Activated CD8-positive, alpha-beta memory T cell treated with anti-CD3 and anti-CD28 coated beads, Interleukin-2, amount 10 ng/mL, durations not matched to agents 7 days and 5 days (primary cell): ENCODE measurements at regions of chr11 and their contacts with region 1.

Region 1: DNA sequence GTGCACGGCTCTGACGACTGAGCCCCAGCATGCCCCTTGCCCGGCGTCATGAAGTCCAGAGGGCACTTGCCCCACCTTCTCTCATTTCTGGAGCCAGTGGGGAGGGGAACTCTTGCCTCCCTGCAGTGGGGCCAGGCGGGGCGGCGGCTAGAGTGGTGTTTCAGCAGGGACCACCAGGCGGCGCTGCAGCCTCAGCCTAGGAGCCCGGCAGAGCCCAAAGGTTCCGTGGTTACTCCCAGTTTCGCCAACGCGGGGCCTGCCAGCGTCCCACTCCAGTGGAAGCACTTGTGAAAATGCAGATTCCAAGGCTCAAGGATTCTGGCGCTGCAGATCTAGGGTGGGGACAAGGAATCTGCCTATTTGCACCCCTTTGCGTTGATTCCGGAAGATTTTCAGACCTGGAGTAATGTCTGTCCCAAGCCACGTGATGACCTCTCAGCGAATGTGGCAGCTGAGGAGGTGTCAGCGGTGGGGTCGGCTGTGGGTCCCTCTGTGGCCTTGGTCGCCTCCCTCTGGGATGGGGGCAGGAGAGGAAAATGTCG is 55.7 kb downstream of the CD82 start:
- DNase-seq: peak; percentile 68
- ATAC-seq: peak; percentile 66
- H3K4me3 Mint-ChIP-seq: no peak overlapping the region
- H3K27ac Mint-ChIP-seq: no peak overlapping the region
- H3K4me1 Mint-ChIP-seq: peaks cover 6% of the 10 kb centered on the region
- H3K27me3 Mint-ChIP-seq: no peaks in the 10 kb centered on the region

Region 2: DNA sequence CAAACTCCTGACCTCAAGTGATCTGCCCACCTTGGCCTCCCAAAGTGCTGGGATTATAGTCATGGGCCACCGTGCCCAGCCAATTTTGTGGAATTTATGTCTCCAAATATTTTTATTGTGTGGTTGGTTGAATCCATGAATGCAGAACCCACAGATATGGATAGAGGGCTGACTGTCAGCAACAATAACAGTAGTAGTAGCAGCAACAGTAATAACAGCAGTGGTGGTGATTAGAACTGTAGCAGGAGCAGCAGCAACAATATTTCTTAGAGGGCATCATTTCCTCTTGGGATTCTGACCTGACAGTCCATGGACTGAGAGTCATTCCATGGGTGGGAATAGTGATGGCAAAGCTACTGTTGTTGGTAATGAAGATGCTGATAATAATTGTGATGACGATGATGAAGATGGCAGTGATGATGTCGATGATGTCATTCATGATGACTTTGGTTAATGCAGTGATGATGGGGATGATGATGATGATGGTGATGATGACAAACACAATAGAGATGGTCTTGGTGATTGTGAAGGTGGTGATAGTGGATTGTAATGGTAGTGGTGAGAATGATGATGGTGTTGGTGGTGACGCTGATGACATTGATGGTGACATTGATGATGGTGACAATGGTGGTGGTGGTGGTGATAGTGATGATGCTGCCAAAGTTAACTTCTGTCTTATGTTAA is 69.6 kb before region 1 on chr11:
- CTCF ChIA-PET with region 1: interaction called, 530 read pairs
- DNase-seq: no peak
- ATAC-seq: peak; percentile 33
- H3K4me3 Mint-ChIP-seq: no peak overlapping the region
- H3K27ac Mint-ChIP-seq: no peak overlapping the region
- H3K4me1 Mint-ChIP-seq: peaks cover under 1% of the 10 kb centered on the region
- H3K27me3 Mint-ChIP-seq: no peaks in the 10 kb centered on the region

Region 3: GRCh38 chr11:44565211-44565952 is 55.8 kb before region 1 on chr11 and contains the start of gene CD82:
- CTCF ChIA-PET with region 1: interaction called, 530 read pairs
- DNase-seq: peak; percentile 99
- ATAC-seq: peak; percentile 93
- H3K4me3 Mint-ChIP-seq: peak within 1 kb of the TSS; percentile 78
- H3K27ac Mint-ChIP-seq: peak within 1 kb of the TSS; percentile 85
- H3K4me1 Mint-ChIP-seq: peaks cover 54% of the 10 kb centered on the region
- H3K27me3 Mint-ChIP-seq: no peaks in the 10 kb centered on the region
- total RNA-seq, gene CD82: 90.2 to 285 TPM

Region 4: DNA sequence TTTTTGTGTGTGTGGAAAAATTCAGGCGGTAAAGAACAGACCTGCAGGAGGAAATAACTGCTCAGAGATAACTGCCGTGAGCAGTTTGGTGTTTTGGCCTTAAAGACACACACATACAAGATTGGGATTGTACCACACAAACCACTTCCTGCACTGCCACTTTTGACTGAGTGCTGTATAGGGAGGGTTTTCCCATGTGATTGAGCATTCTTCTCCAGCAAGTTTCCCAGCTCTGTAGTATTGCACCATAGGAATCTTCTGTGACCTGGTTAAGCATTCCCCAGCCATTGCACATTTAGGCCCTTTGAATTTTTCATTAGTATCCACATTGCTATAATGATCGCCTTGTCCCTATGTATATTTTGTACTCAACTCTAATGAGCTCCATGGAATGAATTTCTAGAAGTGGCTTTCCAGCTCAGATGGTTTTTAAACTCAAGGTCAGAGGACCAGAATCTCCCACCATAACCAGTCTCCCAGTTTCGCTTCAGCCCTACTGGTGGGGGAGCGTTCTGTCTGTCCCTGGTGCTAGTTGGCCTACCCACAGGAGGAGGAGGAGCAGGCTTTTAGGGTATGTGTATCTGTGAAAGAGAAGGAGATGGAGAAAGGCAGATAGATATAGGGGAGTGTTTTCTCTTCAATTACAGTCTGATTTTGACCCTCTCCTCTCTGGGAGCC is 46.5 kb before region 1 on chr11:
- CTCF ChIA-PET with region 1: interaction called, 21 read pairs
- DNase-seq: peak; percentile 85
- ATAC-seq: peak; percentile 78
- H3K4me3 Mint-ChIP-seq: peak overlapping the region; percentile 15
- H3K27ac Mint-ChIP-seq: peak overlapping the region; percentile 95
- H3K4me1 Mint-ChIP-seq: peaks cover 86% of the 10 kb centered on the region
- H3K27me3 Mint-ChIP-seq: no peaks in the 10 kb centered on the region

Region 5: DNA sequence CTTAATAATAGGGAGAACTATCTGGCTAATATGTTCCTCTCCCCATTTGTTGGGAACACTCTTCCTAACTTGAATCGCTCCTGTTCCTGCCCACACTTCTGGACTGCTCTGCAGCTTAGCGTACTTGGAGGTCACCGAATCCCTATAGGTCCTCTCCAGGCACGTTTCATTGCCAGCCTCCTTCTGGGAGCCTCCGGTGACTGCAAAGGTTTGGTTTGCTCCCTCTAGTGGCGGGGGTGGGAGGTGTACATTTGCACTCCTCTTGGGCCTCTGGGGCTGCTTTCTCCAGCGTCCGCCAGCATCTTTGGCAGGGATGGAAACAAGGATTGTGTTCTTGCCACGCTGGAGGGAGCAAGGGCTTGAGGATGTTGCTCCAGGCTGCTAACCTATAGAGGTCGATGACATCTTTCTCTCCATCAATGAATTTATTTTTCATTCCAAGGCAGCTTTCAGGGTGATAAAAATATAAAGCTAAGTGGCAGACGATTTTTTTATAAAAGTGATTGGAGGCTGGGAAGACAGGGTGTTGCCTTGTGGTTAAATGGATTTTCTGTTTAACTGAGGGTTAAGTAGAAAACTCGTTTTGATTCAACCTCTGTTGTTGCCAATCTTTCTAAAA is 154.3 kb after region 1 on chr11:
- CTCF ChIA-PET with region 1: interaction called, 34 read pairs
- DNase-seq: peak; percentile 70
- ATAC-seq: peak; percentile 65
- H3K4me3 Mint-ChIP-seq: no peak overlapping the region
- H3K27ac Mint-ChIP-seq: no peak overlapping the region
- H3K4me1 Mint-ChIP-seq: no peaks in the 10 kb centered on the region
- H3K27me3 Mint-ChIP-seq: peaks cover 11% of the 10 kb centered on the region